ENCODE measurements at regions of chr10 and their contacts with region 1.

Region 1: GRCh38 chr10:4686644-4686996 is 139.4 kb upstream of the AKR1E2 start:
- DNase-seq: peak; percentile 93
- ATAC-seq: peak; percentile 83
- H3K4me3 ChIP-seq: no peak overlapping the region
- H3K27ac ChIP-seq: peak overlapping the region; percentile 100
- H3K4me1 ChIP-seq: peaks cover 63% of the 10 kb centered on the region
- H3K27me3 ChIP-seq: no peaks in the 10 kb centered on the region
- CTCF ChIP-seq: no peak

Region 2: GRCh38 chr10:4663162-4663904 is 23.3 kb before region 1 on chr10:
- CTCF ChIA-PET with region 1: interaction called, 4 read pairs
- POLR2A ChIA-PET with region 1: interaction called, 14 read pairs
- intact Hi-C with region 1: loop called (anchors 2 kb)
- DNase-seq: peak; percentile 93
- ATAC-seq: peak; percentile 93
- H3K4me3 ChIP-seq: no peak overlapping the region
- H3K27ac ChIP-seq: peak overlapping the region; percentile 98
- H3K4me1 ChIP-seq: peaks cover 45% of the 10 kb centered on the region
- H3K27me3 ChIP-seq: no peaks in the 10 kb centered on the region
- CTCF ChIP-seq: no peak

Region 3: GRCh38 chr10:4790045-4790444 is 103.4 kb after region 1 on chr10:
- CTCF ChIA-PET with region 1: no interaction called
- POLR2A ChIA-PET with region 1: no interaction called
- intact Hi-C with region 1: no loop called
- DNase-seq: no peak
- ATAC-seq: no peak
- H3K4me3 ChIP-seq: no peak overlapping the region
- H3K27ac ChIP-seq: no peak overlapping the region
- H3K4me1 ChIP-seq: 0 out of 2 replicates have a peak, but pooled peaks cover 4% of the 10 kb centered on the region
- H3K27me3 ChIP-seq: no peaks in the 10 kb centered on the region
- CTCF ChIP-seq: no peak

Measured in PC-3 (cell line).